Activated CD4-positive, alpha-beta memory T cell treated with anti-CD3 and anti-CD28 coated beads for 36 hours (primary cell): ENCODE measurements at regions of chr2 and their contacts with region 1.

Region 1: DNA sequence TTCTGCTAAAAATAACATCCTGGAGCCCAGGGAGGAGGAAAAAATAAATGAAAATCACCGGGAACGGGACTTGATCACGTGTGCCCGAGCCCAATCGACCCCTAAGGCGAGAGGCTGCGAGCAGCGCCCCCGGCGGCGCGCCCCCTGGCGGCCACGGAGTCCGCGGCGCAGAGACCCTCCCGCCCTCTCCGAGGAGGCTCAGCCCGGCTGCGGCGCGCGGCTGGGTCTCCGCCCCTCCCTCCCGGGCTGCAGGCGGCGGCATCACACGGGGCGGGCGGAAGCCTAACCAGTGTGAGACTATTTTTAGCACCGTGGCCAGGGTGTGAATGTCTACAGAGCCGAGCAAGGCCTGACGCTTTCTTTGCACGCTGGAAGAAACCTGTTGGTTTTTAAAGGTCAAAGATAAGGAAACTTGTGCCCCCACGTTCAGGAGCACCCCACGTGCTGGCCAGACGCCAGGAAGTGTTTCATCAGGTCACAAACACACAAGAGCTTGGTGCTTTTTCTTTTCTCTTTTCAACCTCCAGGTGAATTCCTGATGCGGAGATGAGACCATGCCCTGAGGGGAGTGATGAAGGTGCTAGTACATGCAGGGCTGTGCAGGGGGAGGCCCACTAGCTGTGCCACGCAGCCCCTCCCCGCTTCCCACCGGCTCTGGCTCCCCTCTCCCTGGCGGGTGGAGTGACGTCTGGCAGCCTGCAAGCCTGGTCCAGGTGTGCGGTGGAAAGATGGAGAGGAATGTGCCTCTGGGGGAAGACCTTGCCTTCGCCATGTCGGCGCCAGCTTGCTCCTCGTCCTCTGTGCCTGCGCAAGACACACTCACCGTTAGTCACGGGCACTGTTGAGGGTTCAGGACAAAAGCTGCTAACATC is 35.3 kb upstream of the DNMT3A start:
- DNase-seq: peak; percentile 96
- H3K4me3 Mint-ChIP-seq: peak overlapping the region; percentile 50
- H3K27ac Mint-ChIP-seq: peak overlapping the region; percentile 96
- H3K4me1 Mint-ChIP-seq: peaks cover 27% of the 10 kb centered on the region
- H3K27me3 Mint-ChIP-seq: no peaks in the 10 kb centered on the region

Region 2: GRCh38 chr2:25301453-25302352 is 75.3 kb before region 1 on chr2:
- CTCF ChIA-PET with region 1: interaction called, 4 read pairs
- POLR2A ChIA-PET with region 1: no interaction called
- intact Hi-C with region 1: loop called (anchors 2 kb)
- DNase-seq: peak; percentile 94
- H3K4me3 Mint-ChIP-seq: no peak overlapping the region
- H3K27ac Mint-ChIP-seq: peak overlapping the region; percentile 47
- H3K4me1 Mint-ChIP-seq: peaks cover 58% of the 10 kb centered on the region
- H3K27me3 Mint-ChIP-seq: no peaks in the 10 kb centered on the region

Region 3: DNA sequence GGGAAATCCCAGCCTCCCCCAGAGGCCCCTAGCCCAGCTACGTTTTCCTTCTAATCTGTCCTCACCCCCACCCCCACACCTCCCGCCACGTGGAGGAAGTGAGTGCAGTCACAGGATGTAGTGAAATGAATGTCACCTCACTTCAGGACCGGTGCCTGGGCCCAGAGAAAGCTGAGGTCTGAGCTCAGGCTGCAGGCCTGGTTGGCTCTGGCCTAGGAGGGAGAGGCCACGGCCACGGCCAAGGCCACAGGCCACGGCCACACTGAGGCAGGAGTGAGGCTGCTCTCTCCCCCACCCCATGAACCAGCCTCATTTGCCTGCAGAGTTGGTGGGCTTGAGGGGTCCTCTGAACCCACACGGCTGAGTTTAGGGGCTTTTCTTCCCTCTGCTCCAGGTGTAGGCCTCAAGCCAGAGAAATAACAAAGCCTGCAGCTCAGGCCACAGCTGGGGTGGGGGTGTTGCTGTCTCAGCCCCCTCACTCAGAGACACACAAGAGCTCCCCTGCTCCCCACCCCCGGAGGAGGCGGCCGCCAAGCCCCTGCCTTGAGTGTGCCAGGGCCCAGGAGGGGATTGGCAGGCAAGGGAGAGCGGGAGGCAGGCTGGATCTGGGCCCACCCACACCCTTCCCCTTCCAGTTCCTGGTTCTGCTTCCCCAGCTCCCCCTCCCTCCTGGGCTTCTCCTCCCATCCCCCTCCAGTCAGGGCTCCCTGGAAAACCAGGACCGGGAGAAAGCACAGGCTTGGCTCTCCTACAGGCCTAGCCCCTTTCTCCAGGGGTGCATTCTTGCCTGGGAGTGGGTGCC is 62.3 kb before region 1 on chr2:
- CTCF ChIA-PET with region 1: interaction called, 12 read pairs
- POLR2A ChIA-PET with region 1: no interaction called
- intact Hi-C with region 1: loop called (anchors 1 kb)
- DNase-seq: peak; percentile 96
- H3K4me3 Mint-ChIP-seq: peak overlapping the region; percentile 90
- H3K27ac Mint-ChIP-seq: peak overlapping the region; percentile 95
- H3K4me1 Mint-ChIP-seq: peaks cover 61% of the 10 kb centered on the region
- H3K27me3 Mint-ChIP-seq: no peaks in the 10 kb centered on the region

Region 4: GRCh38 chr2:25386971-25387875 is 10.2 kb after region 1 on chr2:
- CTCF ChIA-PET with region 1: interaction called, 20 read pairs
- POLR2A ChIA-PET with region 1: no interaction called
- intact Hi-C with region 1: no loop called
- DNase-seq: no peak
- H3K4me3 Mint-ChIP-seq: no peak overlapping the region
- H3K27ac Mint-ChIP-seq: no peak overlapping the region
- H3K4me1 Mint-ChIP-seq: peaks cover 3% of the 10 kb centered on the region
- H3K27me3 Mint-ChIP-seq: no peaks in the 10 kb centered on the region

Region 5: DNA sequence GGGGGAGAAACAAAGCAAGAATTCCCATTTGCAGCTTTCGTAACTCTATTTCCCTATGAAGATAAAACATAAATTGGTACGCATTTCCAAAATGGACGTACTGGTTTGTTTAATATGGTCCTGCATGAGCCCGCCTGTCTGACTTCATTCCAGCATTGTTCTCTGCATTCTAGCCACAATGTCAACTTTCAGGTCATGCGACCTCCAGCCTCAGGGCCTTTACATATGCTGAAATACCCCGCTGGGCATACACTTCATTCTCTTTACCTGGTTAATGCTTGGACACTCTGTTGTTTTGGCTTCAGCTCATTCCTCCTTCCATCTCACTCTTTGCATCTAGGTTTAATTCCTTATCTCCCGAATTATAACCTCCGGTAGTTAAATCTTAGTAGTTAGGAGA is 68.5 kb after region 1 on chr2:
- CTCF ChIA-PET with region 1: no interaction called
- POLR2A ChIA-PET with region 1: no interaction called
- intact Hi-C with region 1: no loop called
- DNase-seq: no peak
- H3K4me3 Mint-ChIP-seq: no peak overlapping the region
- H3K27ac Mint-ChIP-seq: no peak overlapping the region
- H3K4me1 Mint-ChIP-seq: peaks cover 4% of the 10 kb centered on the region
- H3K27me3 Mint-ChIP-seq: no peaks in the 10 kb centered on the region

Region 6: GRCh38 chr2:25521665-25522387 is 144.8 kb after region 1 on chr2:
- CTCF ChIA-PET with region 1: interaction called, 4 read pairs
- POLR2A ChIA-PET with region 1: no interaction called
- intact Hi-C with region 1: loop called (anchors 1 kb)
- DNase-seq: peak; percentile 12
- H3K4me3 Mint-ChIP-seq: no peak overlapping the region
- H3K27ac Mint-ChIP-seq: peak overlapping the region; percentile 26
- H3K4me1 Mint-ChIP-seq: peaks cover 9% of the 10 kb centered on the region
- H3K27me3 Mint-ChIP-seq: no peaks in the 10 kb centered on the region

Region 7: DNA sequence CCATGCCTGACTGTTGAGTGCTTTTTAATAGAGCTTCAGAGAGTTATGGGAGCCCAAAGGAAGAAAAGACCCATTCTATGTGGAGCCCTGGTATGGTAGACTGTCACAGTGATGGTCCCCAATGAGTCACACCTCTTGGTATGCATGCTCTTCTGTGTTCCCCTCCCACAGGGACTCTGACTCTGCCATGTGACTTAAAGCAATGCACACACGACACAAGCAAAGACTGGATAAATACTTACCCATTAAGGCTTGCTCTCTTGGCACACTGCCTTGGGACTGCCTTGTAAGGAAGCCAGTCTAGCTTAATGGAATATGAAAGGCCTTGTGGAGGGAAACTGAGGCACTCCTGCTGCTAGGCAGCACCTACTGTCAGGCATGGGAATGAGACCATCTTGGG is 313.1 kb after region 1 on chr2:
- CTCF ChIA-PET with region 1: no interaction called
- POLR2A ChIA-PET with region 1: no interaction called
- intact Hi-C with region 1: no loop called
- DNase-seq: no peak
- H3K4me3 Mint-ChIP-seq: no peak overlapping the region
- H3K27ac Mint-ChIP-seq: no peak overlapping the region
- H3K4me1 Mint-ChIP-seq: no peaks in the 10 kb centered on the region
- H3K27me3 Mint-ChIP-seq: no peaks in the 10 kb centered on the region